AG04449 (cell line): ENCODE measurements at regions of chr22 and their contacts with region 1.

Region 1: DNA sequence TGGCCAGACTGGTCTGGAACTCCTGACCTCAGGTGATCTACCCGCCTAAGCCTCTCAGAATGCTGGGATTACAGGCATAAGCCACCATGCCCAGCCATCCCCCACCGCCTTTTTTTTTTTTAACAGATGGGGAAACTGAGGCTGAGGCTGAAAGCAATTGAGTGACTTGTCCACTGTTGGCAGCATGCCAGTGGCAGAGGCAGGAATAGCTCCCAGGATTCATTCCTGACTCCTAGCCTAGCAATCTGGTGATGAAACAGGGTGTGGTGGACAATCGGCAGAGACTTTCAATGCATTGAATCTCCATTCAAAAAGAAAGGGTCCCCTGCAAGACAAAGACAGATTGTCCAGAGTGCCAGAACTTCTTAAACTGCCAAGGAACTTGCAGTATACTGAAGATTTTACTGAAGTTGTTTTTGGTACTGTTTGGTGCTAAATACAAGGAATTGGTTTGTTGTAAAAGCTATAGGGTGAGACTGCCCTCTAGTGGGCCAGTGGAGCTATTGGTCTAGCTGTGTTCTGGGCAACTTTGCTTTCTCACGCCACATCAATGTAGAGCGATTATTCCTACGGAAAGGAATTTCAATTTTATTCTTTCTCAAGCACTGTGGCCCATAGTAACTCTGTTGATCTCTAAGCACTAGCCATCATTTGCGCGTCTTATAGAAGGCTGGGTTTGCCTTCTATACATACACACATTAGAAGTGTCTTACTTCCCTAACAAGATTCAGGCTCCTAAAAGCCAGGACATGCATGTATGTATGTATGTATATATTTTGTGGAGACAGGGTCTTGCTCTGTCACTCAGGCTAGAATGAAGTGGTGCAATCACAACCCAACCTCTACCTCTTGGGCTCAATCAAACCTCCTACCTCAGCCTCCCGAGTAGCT is 21.0 kb downstream of the C22orf31 start:
- DNase-seq: peak; percentile 74
- H3K4me3 ChIP-seq: no peak overlapping the region
- CTCF ChIP-seq: peak; percentile 82

Region 2: DNA sequence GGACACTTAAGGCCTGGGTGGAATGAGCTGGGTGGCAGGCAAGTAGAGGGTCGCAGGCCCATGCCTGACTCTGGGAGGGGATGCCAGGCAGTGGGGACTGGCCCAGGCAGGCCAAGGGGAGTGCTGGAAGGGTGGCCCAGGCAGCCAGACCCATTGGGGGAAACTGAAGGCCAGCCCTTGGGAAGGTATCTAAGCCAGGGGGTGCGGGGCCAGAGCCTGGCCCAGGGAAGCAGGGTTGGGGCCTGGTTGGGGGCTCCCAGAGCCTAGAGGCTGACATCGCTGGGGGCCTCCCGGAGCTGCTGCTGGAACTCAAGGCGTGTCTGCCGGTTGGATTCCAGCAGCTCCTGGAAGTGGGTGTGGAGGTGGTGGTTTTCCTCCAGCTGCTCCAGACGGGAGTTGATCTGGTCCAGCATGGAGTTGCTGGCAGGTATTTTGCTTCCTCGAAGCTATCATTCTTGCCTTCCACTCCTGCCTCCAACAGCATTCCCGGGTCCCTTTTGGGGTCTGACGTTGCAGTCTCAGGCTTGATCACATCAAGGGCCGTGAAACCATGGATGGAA is 204.9 kb before region 1 on chr22:
- CTCF ChIA-PET with region 1: interaction called, 42 read pairs
- POLR2A ChIA-PET with region 1: no interaction called
- DNase-seq: no peak
- H3K4me3 ChIP-seq: no peak overlapping the region
- CTCF ChIP-seq: no peak

Region 3: GRCh38 chr22:28846994-28847393 is 193.6 kb before region 1 on chr22:
- CTCF ChIA-PET with region 1: interaction called, 46 read pairs
- POLR2A ChIA-PET with region 1: no interaction called
- DNase-seq: no peak
- H3K4me3 ChIP-seq: no peak overlapping the region
- CTCF ChIP-seq: no peak

Region 4: DNA sequence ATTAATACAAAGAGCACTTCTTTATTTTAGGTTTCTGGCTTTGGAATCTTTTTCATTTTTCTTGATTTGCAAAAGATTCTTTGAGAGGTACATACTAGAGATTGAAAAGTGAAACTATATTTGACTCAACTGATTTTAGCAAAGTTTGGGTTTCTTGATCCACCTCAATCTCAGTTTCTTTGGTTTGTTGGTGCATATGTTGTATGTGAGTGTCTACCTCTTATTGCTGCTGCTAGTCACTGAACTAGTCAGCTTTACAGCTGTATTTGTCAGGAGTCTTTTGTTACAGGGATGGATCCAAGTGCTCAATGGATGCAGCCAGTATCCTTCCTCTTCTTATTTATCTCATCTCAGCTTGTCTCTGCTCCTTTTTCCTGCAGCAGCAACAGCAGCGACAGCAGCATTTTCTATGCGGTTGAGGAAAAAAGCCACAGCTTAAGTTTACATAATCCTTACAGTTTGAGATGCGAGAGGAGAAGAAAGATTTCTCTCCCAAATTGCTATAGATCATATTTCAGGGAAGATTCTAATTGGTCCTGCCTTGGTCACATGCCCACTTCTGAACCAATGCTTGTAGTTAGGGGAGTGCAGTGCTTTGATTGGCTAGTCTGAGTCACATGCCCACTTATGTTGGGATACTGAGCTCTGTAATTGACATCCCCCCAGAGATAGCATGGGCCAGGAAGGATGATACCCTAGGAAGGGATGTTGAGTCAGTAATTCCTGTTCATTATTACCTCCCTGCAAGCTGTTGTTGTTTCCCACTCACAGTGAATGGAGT is 167.3 kb before region 1 on chr22:
- CTCF ChIA-PET with region 1: interaction called, 14 read pairs
- POLR2A ChIA-PET with region 1: no interaction called
- DNase-seq: no peak
- H3K4me3 ChIP-seq: no peak overlapping the region
- CTCF ChIP-seq: no peak